Sigmoid colon (tissue), 7 donors: ENCODE measurements at regions of chr15 and their contacts with region 1.

Region 1: DNA sequence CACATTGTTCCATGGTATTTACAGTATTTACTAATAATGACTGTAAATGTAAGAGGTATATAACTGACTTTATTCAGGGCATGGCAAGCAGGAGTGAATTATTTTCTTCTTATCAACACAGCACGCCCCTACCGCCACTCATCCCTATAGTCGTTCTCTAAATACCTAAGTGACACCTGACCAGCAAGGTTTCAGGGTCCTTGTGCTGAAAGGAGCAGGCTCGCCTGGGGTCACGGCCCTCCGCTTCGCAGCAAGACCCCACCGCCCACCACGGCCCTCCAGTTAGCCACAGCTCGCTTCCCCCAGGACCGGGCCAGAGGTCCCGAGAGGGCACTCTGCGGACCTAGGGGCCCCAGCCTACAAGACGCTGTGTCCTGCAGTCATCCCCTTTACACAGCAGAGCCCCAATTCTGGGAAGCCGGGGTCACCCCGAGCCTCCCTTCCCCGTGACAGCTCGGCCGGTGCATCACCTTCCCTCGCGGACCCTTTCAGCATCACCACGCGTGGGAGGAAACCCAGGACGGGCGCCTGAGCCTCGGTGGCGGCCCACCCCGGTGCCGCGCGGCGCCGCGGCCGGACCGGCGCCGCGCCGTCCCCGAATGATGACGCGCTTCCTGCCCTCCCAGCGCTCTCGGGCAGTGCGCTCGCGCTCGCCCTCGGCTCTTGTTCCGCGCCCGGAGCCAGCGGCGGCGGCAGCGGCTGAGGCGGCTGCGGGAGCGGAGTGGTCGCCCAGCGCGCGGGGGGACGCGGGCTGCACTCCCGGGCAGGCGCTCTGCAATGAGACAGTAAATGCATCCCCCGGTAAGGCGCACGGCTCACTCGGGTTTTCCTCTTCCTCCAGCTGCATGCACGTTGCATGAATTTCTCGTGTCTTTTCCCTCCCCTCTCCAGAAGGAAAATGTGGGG is 225.1 kb upstream of the C2CD4B start:
- DNase-seq: peak; percentile 79
- H3K4me3 ChIP-seq: peak within 1 kb of the TSS; percentile 60 to 88 (median 84)
- H3K27ac ChIP-seq: peak within 1 kb of the TSS; percentile 80 to 91 (median 82)
- H3K4me1 ChIP-seq: peaks cover 0 to 28% (median 15%) of the 10 kb centered on the region in 4 donors
- H3K27me3 ChIP-seq: no peaks in the 10 kb centered on the region
- CTCF ChIP-seq: no peak
- EP300 ChIP-seq: no peak
- POLR2A ChIP-seq: peak; percentile 23 to 51

Region 2: DNA sequence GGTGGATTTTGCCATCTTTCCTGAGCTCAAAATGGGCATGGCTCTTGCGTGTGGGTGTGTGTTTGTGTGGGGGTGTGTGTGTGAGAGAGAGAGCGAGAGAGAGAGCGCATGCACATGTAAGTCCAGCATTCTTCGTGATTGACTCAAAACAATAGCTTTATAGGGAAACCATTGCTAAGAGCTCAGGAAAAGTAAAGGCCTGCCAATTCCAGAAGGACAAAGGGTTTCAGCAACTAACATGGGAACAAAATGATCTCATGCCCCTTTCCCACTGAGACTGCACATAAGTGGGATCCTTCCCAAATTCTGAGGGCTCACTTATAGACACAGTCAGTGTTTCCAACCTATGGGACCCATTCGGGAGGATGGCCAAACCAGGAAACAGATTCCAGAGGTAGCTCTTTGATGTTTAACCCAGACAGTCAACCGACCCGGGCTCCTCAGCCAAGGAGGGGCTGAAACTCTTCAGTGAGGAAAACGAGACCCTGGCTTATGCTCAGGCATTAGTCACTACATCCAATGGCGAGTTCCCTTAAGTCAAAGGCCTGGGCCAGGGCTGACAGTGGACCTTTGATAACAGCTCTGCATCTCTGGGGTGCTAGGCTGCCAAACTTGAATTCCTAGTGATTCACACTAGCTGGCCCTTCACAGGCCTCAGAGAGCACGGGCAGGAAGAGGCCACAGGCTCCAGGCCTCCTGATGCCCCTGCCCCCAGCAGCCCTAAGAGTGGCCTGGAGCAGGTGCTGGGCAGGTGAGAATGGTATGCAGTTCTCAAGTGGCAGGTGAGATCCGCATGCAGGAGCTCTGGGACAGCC is 79.9 kb after region 1 on chr15:
- intact Hi-C with region 1: loop called (anchors 2 kb)
- DNase-seq: peak; percentile 87
- H3K4me3 ChIP-seq: no peak overlapping the region
- H3K27ac ChIP-seq: peak overlapping the region; percentile 48 to 77 (median 71)
- H3K4me1 ChIP-seq: peaks cover 0 to 51% (median 49%) of the 10 kb centered on the region in 4 donors
- H3K27me3 ChIP-seq: no peaks in the 10 kb centered on the region
- CTCF ChIP-seq: no peak
- EP300 ChIP-seq: no peak
- POLR2A ChIP-seq: no peak

Region 3: DNA sequence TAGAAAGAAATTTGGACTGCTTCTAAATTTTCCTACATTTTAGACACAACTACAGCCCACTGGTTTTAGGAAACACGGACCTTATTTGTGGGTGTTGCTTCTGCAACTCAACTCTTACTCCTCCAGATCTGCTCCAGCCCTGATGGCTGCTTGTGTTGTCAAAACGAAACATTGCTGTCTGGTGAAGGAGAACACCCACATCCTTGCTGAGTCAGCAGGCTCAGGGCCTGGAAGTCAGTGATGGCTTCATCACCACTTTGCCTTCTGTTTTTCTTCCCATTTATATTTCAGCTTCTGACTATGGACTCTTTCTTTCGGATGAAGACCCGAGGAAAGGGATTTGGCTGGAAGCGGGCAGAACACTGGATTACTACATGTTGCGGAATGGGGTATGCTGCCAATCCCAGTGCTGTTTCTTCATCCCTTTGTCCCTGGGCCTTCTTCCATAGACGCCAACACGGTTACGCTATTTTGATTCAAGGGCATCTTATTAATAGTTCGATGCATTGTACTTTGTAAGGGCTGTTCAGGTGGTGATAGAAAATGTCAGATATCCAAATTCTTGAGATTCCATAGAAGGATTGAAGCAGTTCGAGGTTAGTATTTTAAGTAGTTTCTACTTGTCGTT is 259.8 kb after region 1 on chr15:
- intact Hi-C with region 1: loop called (anchors 2 kb)
- DNase-seq: peak; percentile 75
- H3K4me3 ChIP-seq: no peak overlapping the region
- H3K27ac ChIP-seq: no peak overlapping the region
- H3K4me1 ChIP-seq: no peaks in the 10 kb centered on the region
- H3K27me3 ChIP-seq: no peaks in the 10 kb centered on the region
- CTCF ChIP-seq: no peak
- EP300 ChIP-seq: no peak
- POLR2A ChIP-seq: no peak

Region 4: DNA sequence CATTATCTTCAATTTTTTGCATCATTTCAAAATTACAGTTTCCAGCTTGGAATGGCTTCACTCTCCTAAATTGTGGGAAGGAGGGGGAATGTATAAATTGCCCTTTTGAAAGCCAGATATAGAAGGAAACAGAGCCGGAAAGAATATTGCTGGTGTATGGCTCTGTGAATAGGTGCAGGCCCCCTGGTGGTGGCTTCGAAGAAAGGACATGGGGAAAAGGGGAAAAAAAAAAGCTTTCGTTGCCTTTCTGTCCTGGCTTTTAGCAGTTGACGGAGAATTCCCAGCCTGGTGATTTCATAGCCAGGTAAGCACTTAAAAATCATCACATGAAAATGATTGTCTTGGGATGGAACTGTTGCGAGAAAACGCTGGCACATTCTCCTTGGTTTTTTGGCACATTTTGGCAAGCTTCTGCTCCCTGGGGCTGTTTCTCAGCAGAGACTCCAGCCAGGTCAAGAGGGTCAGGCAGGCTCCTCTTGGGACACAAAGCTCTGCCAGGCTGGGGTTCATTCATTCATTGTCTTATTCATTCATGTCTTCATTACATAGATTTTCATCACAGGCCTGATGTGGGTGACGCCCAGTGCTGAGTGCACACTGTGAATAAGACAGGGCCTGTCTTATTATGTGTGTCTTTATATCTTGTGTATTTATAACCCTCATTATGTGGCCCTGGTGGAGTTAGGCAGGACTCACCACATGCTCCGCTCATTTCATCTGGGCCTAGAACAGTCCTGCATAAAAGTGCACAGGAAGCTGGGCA is 352.5 kb after region 1 on chr15:
- intact Hi-C with region 1: loop called (anchors 2 kb)
- DNase-seq: peak; percentile 92
- H3K4me3 ChIP-seq: no peak overlapping the region
- H3K27ac ChIP-seq: peak overlapping the region; percentile 41 to 74 (median 66)
- H3K4me1 ChIP-seq: peaks cover 0 to 16% (median 14%) of the 10 kb centered on the region in 4 donors
- H3K27me3 ChIP-seq: no peaks in the 10 kb centered on the region
- CTCF ChIP-seq: peak; percentile 53 to 86 (median 75)
- EP300 ChIP-seq: peak in 2 of 4 donors; percentile 13 to 66
- POLR2A ChIP-seq: no peak